Left colon (tissue), 2 donors: ENCODE measurements at regions of chr5 and their contacts with region 1.

Region 1: DNA sequence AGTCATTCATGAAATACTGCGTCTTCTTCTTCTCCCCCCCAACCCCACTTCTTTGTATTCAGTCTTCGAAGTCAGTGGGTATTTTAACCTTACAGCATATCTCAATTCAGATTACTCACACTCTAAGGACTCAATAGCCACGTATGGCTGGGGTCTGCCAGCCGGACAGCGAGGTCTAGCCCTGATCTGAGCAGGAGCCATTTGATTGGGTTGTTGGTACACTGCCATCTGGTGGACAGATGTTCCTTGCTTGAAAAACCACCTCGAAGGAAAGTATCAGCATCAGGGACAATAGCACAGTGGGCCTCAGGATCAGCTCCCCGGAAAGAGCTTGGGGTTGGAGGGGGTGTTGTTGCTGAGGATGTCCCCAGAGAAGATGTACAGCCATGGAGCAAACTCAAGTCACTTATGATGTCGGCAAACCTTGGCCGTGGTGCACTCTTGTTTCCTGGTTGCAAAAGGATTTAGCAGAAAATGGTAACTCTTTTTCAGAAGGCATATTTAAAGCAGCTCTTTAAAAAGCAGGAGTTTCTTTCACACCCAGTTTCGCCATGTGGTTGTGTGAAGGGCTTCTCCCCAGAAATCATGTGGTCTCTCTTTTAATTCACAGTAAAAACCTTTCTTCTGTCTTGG is 31.7 kb upstream of the KCNMB1 start:
- DNase-seq: peak in 1 of 2 donors; percentile 52
- ATAC-seq: no peak

Region 2: GRCh38 chr5:170225326-170226128 is 195.4 kb before region 1 on chr5:
- intact Hi-C with region 1: loop called in 1 of 2 experiments (anchors 10 kb)
- DNase-seq: peak; percentile 48 to 78
- ATAC-seq: no peak

Region 3: GRCh38 chr5:170252720-170253350 is 168.1 kb before region 1 on chr5:
- intact Hi-C with region 1: no loop called
- DNase-seq: no peak
- ATAC-seq: no peak

Region 4: DNA sequence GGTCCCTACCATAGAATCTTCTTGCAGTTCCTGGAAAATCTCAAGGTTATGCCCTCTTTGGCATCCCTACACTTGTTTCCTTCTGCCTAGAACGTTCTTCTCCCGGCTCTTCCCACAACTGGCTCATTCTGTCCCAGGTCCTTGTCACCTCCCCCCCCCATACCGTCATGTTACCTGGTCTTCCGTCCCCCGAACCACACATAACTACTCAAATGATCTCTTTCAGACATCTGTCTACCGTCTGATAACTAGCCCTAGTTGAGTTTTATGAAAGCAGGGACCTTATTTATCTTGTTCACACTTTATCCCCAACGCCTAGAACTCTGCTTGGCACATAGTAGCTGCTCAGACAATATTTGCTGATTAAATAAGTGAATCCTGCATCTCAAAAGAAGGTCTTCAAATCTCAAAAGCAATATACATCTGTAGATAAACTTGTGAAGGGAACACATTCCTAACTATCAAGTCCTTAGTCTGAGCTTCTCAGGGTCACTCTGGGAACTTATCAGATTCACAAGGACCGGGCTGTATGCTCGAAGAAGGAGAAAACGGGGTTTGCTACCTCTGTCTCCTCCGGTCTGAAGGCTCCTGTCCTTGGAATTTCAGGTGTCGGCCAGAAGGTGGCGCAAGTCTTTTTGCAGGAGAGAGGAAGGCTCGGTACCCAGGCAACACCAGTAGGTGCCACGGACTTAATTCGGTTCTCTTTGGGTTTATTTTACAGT is 153.3 kb before region 1 on chr5:
- intact Hi-C with region 1: loop called in 1 of 2 experiments (anchors 2 kb)
- DNase-seq: peak; percentile 67 to 69
- ATAC-seq: peak; percentile 49

Region 5: DNA sequence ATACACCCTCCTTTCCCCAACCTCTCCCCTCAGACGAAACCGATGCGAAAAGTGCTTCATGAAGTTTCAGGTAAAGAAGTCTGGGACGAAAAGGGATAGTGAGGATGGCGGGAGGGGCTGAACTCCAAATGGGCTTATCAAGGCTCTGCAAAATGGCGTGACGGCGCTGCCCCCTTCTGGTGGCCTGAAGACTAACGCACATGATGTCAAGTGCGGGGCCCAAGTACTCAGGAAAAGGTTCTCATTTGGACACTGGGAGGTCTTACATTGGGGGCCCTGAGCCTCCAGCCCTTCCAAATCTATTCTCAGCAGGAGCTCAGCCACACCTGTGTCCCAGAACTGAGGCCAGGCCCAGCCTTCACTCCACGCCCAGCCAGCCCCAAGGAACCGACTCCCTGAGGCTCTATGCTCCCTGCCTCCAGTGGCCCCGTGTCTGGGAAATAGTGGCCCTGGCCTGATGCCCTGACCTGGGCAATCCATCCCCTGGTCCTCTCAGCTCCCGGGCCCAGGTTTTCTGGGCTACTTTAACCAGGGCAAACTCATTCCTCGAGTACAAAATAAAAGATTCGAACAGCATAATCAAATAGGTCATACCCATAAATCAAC is 202.8 kb after region 1 on chr5:
- intact Hi-C with region 1: no loop called
- DNase-seq: peak in 1 of 2 donors; percentile 20
- ATAC-seq: peak; percentile 38